ENCODE measurements at regions of chr14 and their contacts with region 1.

Region 1: DNA sequence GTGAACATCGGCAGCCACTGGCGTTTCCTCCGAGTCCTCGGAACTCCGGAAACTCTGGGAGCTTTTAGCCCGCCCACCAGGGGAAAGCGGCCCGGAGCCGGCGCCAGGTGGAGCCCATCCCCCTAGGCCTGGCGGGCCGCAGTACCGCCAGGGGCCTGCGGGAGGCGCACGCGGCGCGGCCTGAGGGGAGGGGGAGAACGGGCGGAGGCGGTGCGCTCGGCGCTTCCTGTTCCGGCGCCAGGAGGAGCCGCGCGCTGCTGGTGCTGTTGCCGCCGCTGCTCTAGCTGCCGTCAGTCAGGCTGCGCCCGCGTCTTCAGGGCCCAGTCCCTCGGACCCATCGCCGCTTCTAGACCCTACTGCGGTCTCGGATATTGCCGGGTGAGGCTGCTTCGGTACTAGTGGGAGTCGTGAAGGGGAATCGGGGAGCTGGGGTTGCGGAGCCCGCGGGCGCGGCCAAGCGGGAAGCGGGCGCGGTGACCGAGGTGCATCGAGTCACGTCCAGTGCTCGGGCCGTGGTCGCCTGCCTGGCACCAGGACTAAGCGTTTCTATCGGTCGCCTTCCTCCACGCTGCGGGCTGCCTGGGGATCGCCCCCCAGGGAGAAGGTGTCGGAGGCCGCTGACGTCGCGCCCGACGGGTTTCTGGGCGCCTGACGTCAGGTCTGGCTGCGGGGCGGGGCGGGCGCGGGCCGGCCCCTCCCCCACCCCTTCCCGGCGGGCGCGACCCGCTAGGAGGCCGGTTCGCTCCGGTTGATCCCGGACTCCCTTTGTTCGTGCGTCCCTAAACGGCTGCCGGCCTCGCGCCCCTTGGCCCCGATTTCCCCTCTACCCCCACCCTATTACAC is at the start of gene MAPK1IP1L:
- DNase-seq: peak; percentile 82
- ATAC-seq: peak; percentile 96
- H3K4me3 ChIP-seq: peak within 1 kb of the TSS; percentile 76 to 99 (median 94)
- H3K27ac ChIP-seq: peak within 1 kb of the TSS; percentile 99
- H3K4me1 ChIP-seq: peaks cover 46% of the 10 kb centered on the region
- H3K27me3 ChIP-seq: no peaks in the 10 kb centered on the region; a peak in 1 of 5 replicates
- CTCF ChIP-seq: peak; percentile 94
- EP300 ChIP-seq: peak; percentile 16 to 81; a peak in 3 of 4 replicates
- POLR2A ChIP-seq: peak; percentile 96 to 98
- RAD21 ChIP-seq: peak; percentile 88
- total RNA-seq, gene MAPK1IP1L: 27.8 and 34.7 TPM in 2 replicates

Region 2: DNA sequence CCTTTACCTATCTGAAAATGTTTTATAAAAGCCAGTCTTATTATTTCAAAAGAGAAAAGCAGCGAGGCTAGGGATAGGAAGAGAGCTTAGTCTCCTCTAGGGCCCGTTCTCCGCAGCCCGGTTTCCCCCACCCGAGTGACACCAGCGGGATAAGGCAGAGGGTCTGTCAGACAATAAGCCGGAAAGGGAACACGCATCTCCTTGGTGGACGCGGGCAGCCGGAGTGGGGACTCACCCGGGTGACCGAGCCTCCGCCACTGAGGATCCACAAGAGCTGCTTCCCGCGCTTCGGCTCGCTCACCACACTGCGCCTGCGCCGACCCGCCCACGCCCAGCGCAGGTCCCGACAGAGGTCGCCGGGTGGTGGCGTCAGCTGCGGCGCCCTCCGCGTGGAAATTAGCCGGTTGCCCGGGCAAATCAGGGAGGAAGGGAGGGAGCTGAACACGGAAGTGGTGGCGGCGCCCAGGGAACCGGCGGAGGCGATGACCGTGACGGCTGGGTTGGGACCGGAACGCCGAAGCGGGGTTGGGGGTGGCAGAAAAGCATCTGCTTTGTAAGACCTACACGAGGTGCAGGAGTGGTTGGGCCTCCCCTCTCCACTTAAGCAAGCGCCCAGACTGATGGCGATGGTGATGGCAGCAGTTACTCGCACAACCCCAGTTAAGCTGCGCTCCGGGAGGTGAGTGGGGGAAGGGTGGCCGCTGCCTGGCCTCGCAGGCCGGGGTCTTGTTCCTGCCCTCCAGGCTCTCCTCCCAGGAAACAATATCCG is 24.7 kb before region 1 on chr14 and contains the starts of genes SOCS4 and WDHD1:
- CTCF ChIA-PET with region 1: no interaction called
- POLR2A ChIA-PET with region 1: interaction called, 47 read pairs
- in situ Hi-C with region 1: no loop called
- intact Hi-C with region 1: no loop called
- DNase-seq: peak; percentile 89
- ATAC-seq: peak; percentile 97
- H3K4me3 ChIP-seq: peak within 1 kb of the TSS; percentile 66 to 96 (median 86)
- H3K27ac ChIP-seq: peak within 1 kb of the TSS; percentile 73
- H3K4me1 ChIP-seq: peaks cover 55% of the 10 kb centered on the region
- H3K27me3 ChIP-seq: no peaks in the 10 kb centered on the region; a peak in 1 of 5 replicates
- CTCF ChIP-seq: peak; percentile 65
- EP300 ChIP-seq: peak in 1 of 2 experiments; percentile 36; a peak in 1 of 4 replicates
- POLR2A ChIP-seq: peak; percentile 79 to 83
- RAD21 ChIP-seq: peak; percentile 7; the same call in 1 of the 2 replicates
- total RNA-seq, gene SOCS4: 10.0 and 17.3 TPM in 2 replicates
- total RNA-seq, gene WDHD1: 27.5 and 44.4 TPM in 2 replicates

Region 3: DNA sequence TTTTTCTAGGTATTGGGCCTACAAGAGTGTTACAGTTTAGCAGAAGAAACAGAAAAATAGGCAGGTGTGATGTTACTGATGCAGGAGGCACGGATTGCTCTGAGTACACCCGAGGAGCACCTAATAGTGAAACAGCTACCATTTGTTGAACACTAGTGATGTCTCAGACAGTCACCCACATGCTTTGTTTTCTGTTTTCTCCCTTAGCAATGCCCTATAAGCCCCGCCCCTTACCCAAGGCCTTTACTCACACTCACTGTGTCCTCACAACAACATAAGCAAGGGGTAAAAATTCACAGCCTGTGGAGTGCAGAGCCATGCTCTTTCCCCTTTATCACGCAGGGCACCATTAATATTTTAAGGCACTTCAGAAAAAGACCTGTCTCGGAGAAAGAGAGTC is 25.5 kb after region 1 on chr14:
- CTCF ChIA-PET with region 1: no interaction called
- POLR2A ChIA-PET with region 1: interaction called, 27 read pairs
- in situ Hi-C with region 1: no loop called
- intact Hi-C with region 1: no loop called
- DNase-seq: peak; percentile 19
- ATAC-seq: peak; percentile 64
- H3K4me3 ChIP-seq: peak overlapping the region; percentile 40 to 65 (median 62)
- H3K27ac ChIP-seq: no peak overlapping the region
- H3K4me1 ChIP-seq: peaks cover 27% of the 10 kb centered on the region
- H3K27me3 ChIP-seq: no peaks in the 10 kb centered on the region
- CTCF ChIP-seq: no peak
- EP300 ChIP-seq: no peak
- POLR2A ChIP-seq: no peak
- RAD21 ChIP-seq: no peak